Activated naive CD4-positive, alpha-beta T cell treated with anti-CD3 and anti-CD28 coated beads for 36 hours (primary cell): ENCODE measurements at regions of chr1 and their contacts with region 1.

Region 1: GRCh38 chr1:111222308-111223125 is 5.0 kb upstream of the CHI3L2 start:
- DNase-seq: peak; percentile 90
- H3K4me3 Mint-ChIP-seq: peak overlapping the region; percentile 53
- H3K27ac Mint-ChIP-seq: peak overlapping the region; percentile 99
- H3K4me1 Mint-ChIP-seq: peaks cover 94% of the 10 kb centered on the region
- H3K27me3 Mint-ChIP-seq: no peaks in the 10 kb centered on the region

Region 2: GRCh38 chr1:111139956-111140679 is 82.4 kb before region 1 on chr1 and contains the starts of genes CEPT1 and DRAM2:
- CTCF ChIA-PET with region 1: interaction called, 7 read pairs
- intact Hi-C with region 1: loop called (anchors 2 kb)
- DNase-seq: peak; percentile 98
- H3K4me3 Mint-ChIP-seq: peak within 1 kb of the TSS; percentile 94
- H3K27ac Mint-ChIP-seq: peak within 1 kb of the TSS; percentile 91
- H3K4me1 Mint-ChIP-seq: peaks cover 49% of the 10 kb centered on the region
- H3K27me3 Mint-ChIP-seq: no peaks in the 10 kb centered on the region
- total RNA-seq, gene CEPT1: 29.0 to 30.3 TPM
- total RNA-seq, gene DRAM2: 27.7 to 31.1 TPM

Region 3: GRCh38 chr1:111203681-111204200 is 18.8 kb before region 1 on chr1:
- CTCF ChIA-PET with region 1: interaction called, 234 read pairs
- intact Hi-C with region 1: no loop called
- DNase-seq: peak; percentile 94
- H3K4me3 Mint-ChIP-seq: peak overlapping the region; percentile 98
- H3K27ac Mint-ChIP-seq: peak overlapping the region; percentile 99
- H3K4me1 Mint-ChIP-seq: peaks cover 44% of the 10 kb centered on the region
- H3K27me3 Mint-ChIP-seq: no peaks in the 10 kb centered on the region

Region 4: DNA sequence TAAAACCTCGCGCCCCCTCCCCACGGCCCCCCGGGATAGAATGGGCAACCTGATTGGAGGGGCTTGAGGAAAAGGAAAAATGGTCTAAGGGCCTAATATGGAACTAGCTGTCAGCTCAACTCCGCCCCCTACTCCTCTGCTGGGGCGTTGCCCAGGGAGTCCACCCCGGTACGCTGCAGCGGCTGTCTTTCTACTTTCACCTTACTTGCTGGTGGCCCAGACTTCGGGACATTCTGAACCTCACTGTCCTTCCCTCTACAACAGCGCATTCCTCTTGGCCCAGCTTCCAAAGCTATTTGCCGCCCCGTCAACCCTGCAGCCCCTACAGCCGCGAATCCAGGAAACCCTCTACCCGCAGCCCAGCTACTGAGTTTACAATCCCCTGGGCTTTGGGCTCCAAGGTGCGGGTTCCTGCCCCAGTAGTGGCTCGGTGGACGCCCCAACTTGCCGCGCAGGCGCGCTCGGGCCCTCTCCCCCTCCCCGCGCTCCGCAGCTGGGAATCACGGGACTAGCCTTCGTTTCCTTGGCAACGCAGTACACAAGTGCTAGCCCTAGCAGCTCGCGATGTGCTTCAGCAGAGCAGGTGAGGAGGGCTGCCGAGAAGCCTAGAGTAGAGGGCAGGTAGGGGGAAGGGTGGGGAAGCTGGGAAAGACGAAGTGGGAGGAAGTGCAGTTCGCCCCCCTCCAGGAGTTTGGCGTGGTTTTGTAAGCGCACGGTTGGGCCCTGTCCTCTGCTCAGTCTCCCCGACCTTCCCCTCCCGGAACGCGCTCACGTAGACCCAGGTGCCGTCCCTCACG is 123.8 kb after region 1 on chr1:
- CTCF ChIA-PET with region 1: interaction called, 6 read pairs
- intact Hi-C with region 1: loop called (anchors 5 kb)
- DNase-seq: peak; percentile 86
- H3K4me3 Mint-ChIP-seq: peak overlapping the region; percentile 90
- H3K27ac Mint-ChIP-seq: peak overlapping the region; percentile 64
- H3K4me1 Mint-ChIP-seq: peaks cover 12% of the 10 kb centered on the region
- H3K27me3 Mint-ChIP-seq: no peaks in the 10 kb centered on the region

Region 5: GRCh38 chr1:111471012-111471411 is 248.5 kb after region 1 on chr1:
- CTCF ChIA-PET with region 1: interaction called, 3 read pairs
- intact Hi-C with region 1: loop called (anchors 2 kb)
- DNase-seq: peak; percentile 88
- H3K4me3 Mint-ChIP-seq: no peak overlapping the region
- H3K27ac Mint-ChIP-seq: no peak overlapping the region
- H3K4me1 Mint-ChIP-seq: peaks cover 24% of the 10 kb centered on the region
- H3K27me3 Mint-ChIP-seq: no peaks in the 10 kb centered on the region